ENCODE measurements at regions of chr14 and their contacts with region 1.

Region 1: DNA sequence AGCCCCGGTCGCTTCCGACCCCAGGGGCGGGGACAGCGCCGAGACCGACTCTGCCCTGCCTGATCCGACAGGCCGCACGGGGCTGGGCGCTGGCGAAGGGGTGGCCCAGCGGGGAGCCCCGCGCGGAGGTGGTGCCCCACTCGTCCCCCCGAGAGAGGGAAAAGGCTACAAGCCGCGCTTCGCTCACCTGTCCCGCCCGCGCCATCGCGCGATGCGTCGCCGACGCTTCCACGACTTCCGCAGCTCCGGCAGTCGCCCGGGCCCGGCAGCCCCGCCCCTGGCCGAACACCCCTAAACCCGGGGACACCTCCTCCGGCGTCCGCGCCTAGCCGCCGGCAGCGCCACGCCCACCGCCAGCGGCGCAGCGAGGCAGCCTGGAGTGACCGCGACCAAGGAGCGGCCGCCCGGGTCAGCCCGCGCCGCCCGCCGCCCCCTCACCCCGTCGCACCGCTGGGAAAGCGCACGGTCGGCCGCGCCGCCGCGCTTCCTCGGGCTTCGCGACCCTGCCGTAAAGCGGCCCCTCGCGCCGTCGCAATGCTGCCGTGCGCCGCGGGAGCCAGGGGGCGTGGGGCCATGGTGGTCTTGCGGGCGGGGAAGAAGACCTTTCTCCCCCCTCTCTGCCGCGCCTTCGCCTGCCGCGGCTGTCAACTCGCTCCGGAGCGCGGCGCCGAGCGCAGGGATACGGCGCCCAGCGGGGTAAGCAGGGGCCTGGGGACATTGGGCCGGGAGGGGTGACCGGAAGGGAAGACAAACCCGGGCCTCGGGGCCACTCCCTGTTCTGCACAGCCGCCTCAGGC is at the starts of genes BAG5 and COA8:
- DNase-seq: peak; percentile 58 to 91 (median 85)
- H3K4me3 ChIP-seq: peak within 1 kb of the TSS; percentile 70 to 100 (median 98)
- H3K27ac ChIP-seq: peak within 1 kb of the TSS; percentile 77 to 99 (median 94)
- H3K27me3 ChIP-seq: no peaks in the 10 kb centered on the region
- CTCF ChIP-seq: peak in 41 of 56 donors; percentile 13 to 64 (median 38)
- total RNA-seq, gene BAG5: 25.3 to 45.6 (median 35.3) TPM
- total RNA-seq, gene COA8: 21.7 to 47.0 (median 35.6) TPM

Region 2: DNA sequence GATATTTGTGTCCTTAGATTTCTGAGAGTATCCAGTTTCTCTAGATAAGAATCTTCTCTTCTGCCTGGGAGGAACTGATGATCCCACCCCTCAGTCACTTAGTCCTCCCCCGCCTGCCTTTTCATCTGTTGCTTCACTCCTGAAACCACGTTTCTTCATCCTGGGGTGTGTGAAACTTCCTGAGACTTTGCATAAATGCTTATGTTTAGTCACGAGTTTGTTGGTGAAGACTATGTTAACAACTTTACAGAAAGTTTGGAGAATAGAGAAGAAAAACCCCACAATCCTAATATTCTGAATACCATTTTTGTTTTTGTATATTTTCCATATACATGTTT is 144.2 kb before region 1 on chr14:
- intact Hi-C with region 1: no loop called
- DNase-seq: no peak
- H3K4me3 ChIP-seq: no peak overlapping the region
- H3K27ac ChIP-seq: peak overlapping the region in 54 of 59 donors; percentile 26 to 96 (median 86)
- H3K27me3 ChIP-seq: no peaks in the 10 kb centered on the region
- CTCF ChIP-seq: no peak

Region 3: GRCh38 chr14:103628684-103629502 is 66.3 kb after region 1 on chr14 and contains the start of gene KLC1:
- intact Hi-C with region 1: loop called in 1 of 2 experiments (anchors 5 kb)
- DNase-seq: peak; percentile 70 to 92 (median 80)
- H3K4me3 ChIP-seq: peak within 1 kb of the TSS; percentile 72 to 99 (median 93)
- H3K27ac ChIP-seq: peak within 1 kb of the TSS; percentile 89 to 99 (median 97)
- H3K27me3 ChIP-seq: no peaks in the 10 kb centered on the region
- CTCF ChIP-seq: peak in 20 of 56 donors; percentile 5 to 33 (median 20)
- total RNA-seq, gene KLC1: 362 to 692 (median 542) TPM

Region 4: GRCh38 chr14:103715052-103716000 is 152.7 kb after region 1 on chr14 and contains the starts of genes XRCC3 and ZFYVE21:
- intact Hi-C with region 1: loop called in 1 of 2 experiments (anchors 10 kb)
- DNase-seq: peak; percentile 98 to 100 (median 99)
- H3K4me3 ChIP-seq: peak within 1 kb of the TSS; percentile 64 to 97 (median 84)
- H3K27ac ChIP-seq: peak within 1 kb of the TSS in 50 of 59 donors; percentile 10 to 99 (median 71)
- H3K27me3 ChIP-seq: no peaks in the 10 kb centered on the region
- CTCF ChIP-seq: peak in 5 of 56 donors; percentile 7 to 33 (median 13)
- total RNA-seq, gene XRCC3: 4.7 to 19.1 (median 9.9) TPM
- total RNA-seq, gene ZFYVE21: 71.0 to 188 (median 111) TPM

Region 5: DNA sequence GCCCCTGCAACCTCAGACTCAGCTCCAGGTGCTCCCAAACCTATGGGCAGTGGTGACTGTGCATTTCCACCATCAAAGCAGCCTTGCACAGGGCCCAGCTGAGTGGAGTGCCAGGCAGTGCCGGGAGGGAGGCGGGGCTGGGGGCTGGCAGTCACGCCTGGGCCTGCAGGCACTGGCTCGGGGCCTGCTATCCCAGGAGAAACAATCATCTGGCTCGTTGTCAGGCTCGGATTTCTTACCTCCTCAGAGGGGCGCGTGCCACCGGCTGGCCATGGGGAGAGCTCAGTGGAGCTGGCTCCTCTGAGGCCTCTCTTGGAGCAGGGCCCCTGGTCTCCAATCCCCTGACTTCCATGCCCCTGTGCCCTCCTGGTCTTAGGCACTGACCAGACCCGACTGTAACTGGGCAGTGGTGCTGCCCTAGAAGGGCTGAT is 304.9 kb after region 1 on chr14:
- intact Hi-C with region 1: no loop called
- DNase-seq: peak in 2 of 10 donors; percentile 40 to 43
- H3K4me3 ChIP-seq: no peak overlapping the region
- H3K27ac ChIP-seq: peak overlapping the region in 27 of 59 donors; percentile 2 to 77 (median 37)
- H3K27me3 ChIP-seq: no peaks in the 10 kb centered on the region
- CTCF ChIP-seq: no peak

Region 6: DNA sequence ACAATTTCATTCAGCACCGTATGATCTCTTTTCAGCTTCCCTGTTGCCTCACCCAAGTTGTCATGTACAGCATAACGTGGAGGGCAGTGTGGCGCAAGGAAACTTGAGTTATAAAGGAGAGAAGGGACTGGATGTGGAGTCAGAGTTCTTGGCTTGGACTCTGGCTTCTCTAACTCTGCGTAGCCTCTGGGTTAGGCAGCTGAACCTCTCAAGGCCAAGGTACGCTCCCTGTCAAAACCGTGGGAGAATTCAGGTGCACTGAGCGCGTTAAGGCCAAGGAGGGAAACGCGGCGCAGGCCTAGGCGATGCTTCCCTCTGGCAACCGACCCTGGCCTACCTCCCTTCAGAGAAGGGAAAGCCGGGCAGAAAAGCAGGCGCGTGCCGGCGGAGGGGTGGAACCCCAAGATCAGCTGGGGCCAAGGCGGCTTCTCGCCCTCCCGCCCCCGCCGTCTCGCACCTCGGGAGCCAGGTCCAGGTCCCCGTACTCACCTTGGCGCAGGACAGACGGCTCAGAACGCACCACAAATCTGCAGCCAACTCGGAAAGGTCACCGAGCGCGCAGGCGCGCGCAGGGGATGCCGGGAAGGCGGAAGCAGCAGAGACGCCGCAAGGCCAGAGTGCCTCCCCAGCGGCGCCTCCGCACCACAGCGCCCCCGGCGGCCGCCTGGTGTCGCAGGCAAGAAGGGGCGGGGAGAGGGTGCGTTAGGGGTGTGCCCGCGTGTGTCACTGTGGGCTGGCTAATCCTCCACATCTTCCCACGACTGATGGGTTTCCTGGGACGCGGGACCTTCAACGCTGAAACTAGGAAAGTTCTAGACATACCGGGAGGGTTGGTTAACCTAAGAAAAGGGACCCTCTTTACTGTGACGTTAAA is 358.6 kb after region 1 on chr14:
- intact Hi-C with region 1: loop called in 1 of 2 experiments (anchors 10 kb)
- DNase-seq: peak; percentile 86 to 96 (median 90)
- H3K4me3 ChIP-seq: peak overlapping the region; percentile 72 to 100 (median 96)
- H3K27ac ChIP-seq: peak overlapping the region in 54 of 59 donors; percentile 31 to 94 (median 76)
- H3K27me3 ChIP-seq: peaks cover 0 to 4% (median 0%) of the 10 kb centered on the region in 45 donors
- CTCF ChIP-seq: peak; percentile 96 to 100 (median 100)